Common myeloid progenitor, CD34-positive (primary cell): ENCODE measurements at regions of chr2 and their contacts with region 1.

Region 1: DNA sequence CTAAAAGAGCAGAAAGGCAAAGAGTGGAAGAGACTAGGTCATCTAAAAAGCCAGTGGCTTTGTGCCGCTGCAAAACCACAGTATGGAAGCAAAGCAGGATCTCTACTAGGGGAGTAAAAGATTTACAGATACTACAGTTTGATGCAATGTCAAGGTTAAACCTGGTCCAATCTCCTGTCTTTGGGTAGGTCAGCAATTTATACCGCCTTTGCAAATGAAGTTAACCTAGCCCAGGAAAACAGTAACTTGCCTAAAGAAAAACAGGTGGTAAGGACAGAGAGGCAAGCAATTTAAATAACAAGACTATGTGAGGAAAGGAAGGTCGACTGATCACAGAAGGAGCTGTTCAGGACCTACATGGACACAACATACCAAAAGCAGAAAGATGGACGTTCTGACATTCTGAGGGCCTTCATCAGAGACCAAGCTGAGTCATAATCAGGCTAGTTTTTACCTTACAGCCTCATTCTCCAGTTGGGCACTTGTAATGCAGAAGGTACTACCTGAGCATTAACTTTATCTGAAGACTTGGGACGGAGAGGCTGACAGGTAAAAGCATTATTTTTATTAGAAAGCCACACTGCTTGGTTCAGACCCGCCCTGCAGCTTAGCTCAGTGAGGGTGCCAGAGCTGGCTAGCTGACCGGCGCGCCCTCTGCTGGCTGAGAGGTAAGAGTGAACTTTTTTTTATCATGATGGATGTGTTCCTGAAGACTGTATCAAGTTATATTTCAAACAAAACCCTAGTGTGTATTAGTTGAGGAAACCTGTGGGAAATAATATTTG is 15.9 kb downstream of the CDKL4 start:
- DNase-seq: peak; percentile 75 to 88 (median 87)
- H3K4me3 ChIP-seq: peak overlapping the region in 6 of 7 experiments; percentile 55 to 80 (median 66)
- H3K27ac ChIP-seq: peak overlapping the region in 1 of 2 experiments; percentile 47
- H3K4me1 ChIP-seq: peaks cover 4 to 19% (median 12%) of the 10 kb centered on the region in 4 experiments
- H3K27me3 ChIP-seq: no peaks in the 10 kb centered on the region

Region 2: DNA sequence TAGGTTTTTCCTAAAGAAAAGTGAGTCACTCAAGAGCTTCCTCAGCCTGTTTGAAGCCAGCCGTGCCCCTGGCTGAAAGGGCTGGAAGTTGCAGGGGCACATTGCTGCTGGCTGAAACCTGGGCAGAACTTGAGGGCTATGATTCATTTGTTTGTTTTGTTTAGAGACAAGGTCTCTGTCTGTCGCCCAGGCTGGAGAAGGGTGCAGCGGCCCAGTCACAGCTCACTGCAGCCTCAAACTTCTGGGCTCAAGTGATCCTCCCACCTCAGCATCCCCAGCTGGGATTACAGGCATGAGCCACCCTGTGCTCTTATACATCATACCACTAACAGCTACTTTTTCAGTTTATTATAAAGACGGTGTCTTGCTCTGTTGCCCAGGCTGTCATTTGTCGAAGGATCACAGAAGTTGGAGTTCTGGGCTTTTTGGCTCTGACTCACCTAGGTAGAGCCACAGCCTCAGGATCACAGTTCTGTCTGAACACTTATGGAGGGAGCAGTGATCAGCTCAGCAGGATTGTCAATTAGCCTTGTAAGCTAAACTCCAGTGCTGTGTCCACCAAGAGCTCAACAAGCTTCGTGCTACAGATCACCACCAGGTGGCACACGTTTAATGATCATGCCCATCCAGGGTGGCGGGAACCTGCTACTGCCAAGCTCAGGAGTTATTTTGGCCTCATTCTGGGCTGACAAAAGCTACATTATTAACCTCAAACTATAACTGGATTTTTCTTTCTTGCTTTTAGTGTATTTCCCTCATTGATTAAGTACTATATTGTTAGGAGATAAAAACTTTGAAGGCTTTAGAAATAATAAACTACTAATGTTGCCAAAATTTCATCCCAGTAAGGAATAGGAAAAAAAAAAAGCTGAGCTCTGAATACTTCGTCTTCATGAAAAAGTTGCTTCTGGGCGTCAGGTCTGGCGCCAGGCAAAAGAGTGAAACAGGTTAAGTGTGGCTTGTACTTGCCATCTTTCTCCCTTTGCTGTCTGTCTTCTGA is 280.3 kb before region 1 on chr2:
- CTCF ChIA-PET with region 1: interaction called, 60 read pairs
- POLR2A ChIA-PET with region 1: no interaction called
- DNase-seq: peak; percentile 76 to 88 (median 87)
- H3K4me3 ChIP-seq: no peak overlapping the region
- H3K27ac ChIP-seq: no peak overlapping the region
- H3K4me1 ChIP-seq: no peaks in the 10 kb centered on the region
- H3K27me3 ChIP-seq: no peaks in the 10 kb centered on the region

Region 3: GRCh38 chr2:39059366-39059952 is 168.4 kb before region 1 on chr2:
- CTCF ChIA-PET with region 1: interaction called, 198 read pairs
- POLR2A ChIA-PET with region 1: no interaction called
- DNase-seq: peak; percentile 63 to 83 (median 77)
- H3K4me3 ChIP-seq: no peak overlapping the region
- H3K27ac ChIP-seq: no peak overlapping the region
- H3K4me1 ChIP-seq: no peaks in the 10 kb centered on the region
- H3K27me3 ChIP-seq: no peaks in the 10 kb centered on the region

Region 4: DNA sequence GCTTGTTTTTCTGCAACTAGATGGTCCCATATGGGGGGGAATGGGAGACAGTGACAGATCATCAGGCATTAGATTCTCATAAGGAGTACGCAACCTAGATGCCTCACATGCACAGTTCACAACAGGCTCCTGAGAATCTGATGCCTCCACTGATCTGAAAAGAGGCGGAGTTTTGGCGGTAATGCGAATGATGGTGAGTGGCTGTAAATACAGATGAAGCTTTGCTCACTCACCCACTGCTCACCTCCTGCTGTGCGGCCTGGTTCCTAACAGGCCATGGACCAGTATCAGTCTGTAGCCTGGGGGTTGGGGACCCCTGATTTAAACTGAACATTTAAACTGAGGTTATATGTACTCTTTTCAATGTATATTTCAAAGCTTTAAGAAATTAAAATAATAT is 147.7 kb before region 1 on chr2:
- CTCF ChIA-PET with region 1: interaction called, 23 read pairs
- POLR2A ChIA-PET with region 1: no interaction called
- DNase-seq: no peak
- H3K4me3 ChIP-seq: no peak overlapping the region
- H3K27ac ChIP-seq: no peak overlapping the region
- H3K4me1 ChIP-seq: peaks cover 3 to 14% (median 6%) of the 10 kb centered on the region in 4 experiments
- H3K27me3 ChIP-seq: no peaks in the 10 kb centered on the region

Region 5: DNA sequence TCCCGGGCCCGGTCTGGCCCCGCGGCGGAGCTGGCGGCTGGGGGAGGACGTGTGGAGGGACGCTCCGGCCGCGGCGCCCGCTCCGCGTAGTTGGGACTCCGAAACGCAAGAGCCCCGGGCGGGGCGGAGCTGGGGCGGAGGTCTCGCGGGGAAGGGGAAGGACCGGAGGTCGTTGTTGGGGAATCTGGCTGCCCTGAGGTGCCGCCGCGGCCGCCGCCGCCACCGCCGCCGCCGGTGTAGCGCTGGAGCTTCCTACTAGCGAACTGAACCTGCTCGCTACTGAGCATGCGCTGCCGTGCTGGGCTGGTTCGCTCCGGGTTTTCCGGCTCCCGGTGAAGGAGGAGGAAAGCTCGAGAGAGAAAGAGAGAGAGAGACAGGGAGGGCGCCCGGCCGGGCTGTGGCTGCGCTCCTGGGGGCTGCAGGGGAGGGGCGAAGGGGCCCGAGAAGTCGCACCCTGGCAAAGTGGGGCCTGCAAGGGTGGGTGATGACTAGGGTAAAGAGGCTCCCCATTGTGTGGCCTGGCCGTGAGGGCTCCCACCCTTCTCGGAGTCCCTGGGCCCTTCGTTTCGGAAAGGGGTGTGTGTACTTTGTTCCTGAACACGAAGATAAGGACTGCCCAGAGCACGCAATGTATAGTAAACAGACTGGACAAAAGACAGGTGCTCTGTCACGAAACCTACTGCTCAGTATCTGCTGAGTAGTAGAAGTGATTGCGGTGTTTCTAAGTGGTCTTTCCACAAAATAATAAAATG is 106.9 kb before region 1 on chr2 and contains the start of gene SOS1:
- CTCF ChIA-PET with region 1: interaction called, 51 read pairs
- POLR2A ChIA-PET with region 1: interaction called, 8 read pairs
- DNase-seq: peak; percentile 94 to 97 (median 97)
- H3K4me3 ChIP-seq: peak within 1 kb of the TSS; percentile 80 to 97 (median 88)
- H3K27ac ChIP-seq: peak within 1 kb of the TSS; percentile 90 to 94
- H3K4me1 ChIP-seq: peaks cover 32 to 65% (median 46%) of the 10 kb centered on the region in 4 experiments
- H3K27me3 ChIP-seq: no peaks in the 10 kb centered on the region

Region 6: GRCh38 chr2:39216346-39217191 is 11.3 kb before region 1 on chr2:
- CTCF ChIA-PET with region 1: interaction called, 21 read pairs
- POLR2A ChIA-PET with region 1: no interaction called
- DNase-seq: peak; percentile 85 to 94 (median 94)
- H3K4me3 ChIP-seq: peak overlapping the region in 5 of 7 experiments; percentile 9 to 63 (median 27)
- H3K27ac ChIP-seq: peak overlapping the region; percentile 82 to 88
- H3K4me1 ChIP-seq: peaks cover 13 to 24% (median 22%) of the 10 kb centered on the region in 4 experiments
- H3K27me3 ChIP-seq: no peaks in the 10 kb centered on the region

Region 7: DNA sequence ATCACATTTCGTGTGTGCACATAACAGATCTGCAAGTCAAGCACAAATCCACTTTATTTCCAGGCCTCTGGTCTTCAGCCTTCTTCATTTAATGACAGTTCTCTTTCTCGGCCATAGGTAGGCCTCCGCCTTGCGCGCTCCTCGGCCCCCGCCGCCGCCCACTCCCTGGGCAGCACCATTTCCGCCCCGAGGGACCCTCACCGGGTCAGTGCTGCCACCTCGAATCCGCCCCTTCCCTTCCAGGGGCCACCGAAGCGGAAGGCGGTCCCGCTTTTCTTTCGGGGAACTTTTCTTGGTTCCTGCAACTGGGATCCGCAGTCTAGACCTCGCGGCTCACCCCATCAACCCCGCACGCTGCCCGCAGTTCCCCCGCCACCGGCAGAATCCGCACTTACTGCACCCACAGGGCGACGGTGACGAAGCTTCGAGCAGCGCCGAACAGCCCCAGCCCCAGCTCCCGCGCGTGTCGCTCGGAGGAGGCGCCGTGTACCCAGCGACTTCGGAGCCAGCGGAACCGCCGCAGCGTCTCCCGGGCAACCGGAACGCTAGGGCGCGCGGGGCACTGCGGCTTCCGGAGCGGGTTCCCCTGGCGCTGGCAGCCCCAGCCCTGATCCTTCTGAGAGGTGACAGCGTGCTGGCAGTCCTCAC is 15.8 kb after region 1 on chr2 and contains the start of gene CDKL4:
- CTCF ChIA-PET with region 1: interaction called, 11 read pairs
- POLR2A ChIA-PET with region 1: no interaction called
- DNase-seq: peak; percentile 23 to 58 (median 45)
- H3K4me3 ChIP-seq: peak within 1 kb of the TSS in 6 of 7 experiments; percentile 15 to 54 (median 32)
- H3K27ac ChIP-seq: no peak within 1 kb of the TSS
- H3K4me1 ChIP-seq: peaks cover 0 to 7% (median 1%) of the 10 kb centered on the region in 4 experiments
- H3K27me3 ChIP-seq: no peaks in the 10 kb centered on the region